WTC11 (cell line): ENCODE measurements at regions of chr5 and their contacts with region 1.

Region 1: GRCh38 chr5:14142827-14143548 is at the start of gene TRIO:
- DNase-seq: peak; percentile 93
- ATAC-seq: peak; percentile 81
- H3K4me3 Mint-ChIP-seq: peak within 1 kb of the TSS; percentile 81
- H3K27ac Mint-ChIP-seq: peak within 1 kb of the TSS; percentile 80
- H3K4me1 Mint-ChIP-seq: peaks cover 42% of the 10 kb centered on the region
- H3K27me3 Mint-ChIP-seq: peaks cover 8% of the 10 kb centered on the region; the same call in 1 of the 2 replicates
- CTCF ChIP-seq: peak; percentile 32; the same call in 1 of the 2 replicates
- total RNA-seq, gene TRIO: 69.2 to 88.8 TPM (median 73.5 TPM) in 3 replicates

Region 2: GRCh38 chr5:14167211-14167845 is 24.3 kb after region 1 on chr5:
- CTCF ChIA-PET with region 1: no interaction called
- POLR2A ChIA-PET with region 1: no interaction called
- DNase-seq: no peak
- ATAC-seq: no peak
- H3K4me3 Mint-ChIP-seq: no peak overlapping the region
- H3K27ac Mint-ChIP-seq: no peak overlapping the region
- H3K4me1 Mint-ChIP-seq: peaks cover 61% of the 10 kb centered on the region
- H3K27me3 Mint-ChIP-seq: no peaks in the 10 kb centered on the region
- CTCF ChIP-seq: no peak

Region 3: DNA sequence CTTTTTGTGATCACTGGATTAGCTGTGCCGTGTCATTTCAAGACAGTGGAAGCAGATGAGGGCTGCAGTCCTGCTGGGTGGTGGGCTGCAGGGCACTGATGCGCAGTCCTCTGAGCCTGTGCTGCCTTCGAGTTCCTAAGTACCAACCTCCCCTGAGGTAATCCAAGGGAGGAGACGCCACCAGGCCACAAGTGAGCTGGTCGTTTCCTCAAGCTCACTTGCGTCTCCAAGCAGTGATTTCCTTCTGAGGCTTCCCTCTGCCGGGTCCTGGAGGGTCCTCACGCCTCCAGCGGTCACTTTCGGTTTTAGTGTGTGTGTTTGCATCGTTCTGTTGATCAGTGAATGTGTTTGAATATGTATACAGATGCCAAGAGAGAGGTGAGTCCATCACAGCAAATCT is 115.9 kb after region 1 on chr5:
- CTCF ChIA-PET with region 1: interaction called, 14 read pairs
- POLR2A ChIA-PET with region 1: no interaction called
- DNase-seq: peak; percentile 58
- ATAC-seq: peak; percentile 79
- H3K4me3 Mint-ChIP-seq: peak overlapping the region; percentile 51
- H3K27ac Mint-ChIP-seq: peak overlapping the region; percentile 94
- H3K4me1 Mint-ChIP-seq: peaks cover 80% of the 10 kb centered on the region
- H3K27me3 Mint-ChIP-seq: no peaks in the 10 kb centered on the region
- CTCF ChIP-seq: no peak